H1 (cell line): ENCODE measurements at regions of chr16 and their contacts with region 1.

Region 1: GRCh38 chr16:67159593-67160406 is at the starts of genes FBXL8 and TRADD:
- DNase-seq: peak in 1 of 2 experiments; percentile 83
- H3K4me3 ChIP-seq: peak within 1 kb of the TSS; percentile 37 to 61 (median 46)
- H3K27ac ChIP-seq: no peak within 1 kb of the TSS
- H3K4me1 ChIP-seq: peaks cover 0 to 29% (median 20%) of the 10 kb centered on the region in 4 experiments; a peak in 6 of 7 replicates
- H3K27me3 ChIP-seq: peaks cover 93 to 100% (median 98%) of the 10 kb centered on the region in 4 experiments
- CTCF ChIP-seq: peak; percentile 20 to 46 (median 35); a peak in 3 of 4 replicates
- EP300 ChIP-seq: no peak
- POLR2A ChIP-seq: no peak
- RAD21 ChIP-seq: no peak; a peak in 1 of 4 replicates
- total RNA-seq, gene FBXL8: not detected in 2 replicates
- total RNA-seq, gene TRADD: 0.19 and 0.29 TPM in 2 replicates

Region 2: DNA sequence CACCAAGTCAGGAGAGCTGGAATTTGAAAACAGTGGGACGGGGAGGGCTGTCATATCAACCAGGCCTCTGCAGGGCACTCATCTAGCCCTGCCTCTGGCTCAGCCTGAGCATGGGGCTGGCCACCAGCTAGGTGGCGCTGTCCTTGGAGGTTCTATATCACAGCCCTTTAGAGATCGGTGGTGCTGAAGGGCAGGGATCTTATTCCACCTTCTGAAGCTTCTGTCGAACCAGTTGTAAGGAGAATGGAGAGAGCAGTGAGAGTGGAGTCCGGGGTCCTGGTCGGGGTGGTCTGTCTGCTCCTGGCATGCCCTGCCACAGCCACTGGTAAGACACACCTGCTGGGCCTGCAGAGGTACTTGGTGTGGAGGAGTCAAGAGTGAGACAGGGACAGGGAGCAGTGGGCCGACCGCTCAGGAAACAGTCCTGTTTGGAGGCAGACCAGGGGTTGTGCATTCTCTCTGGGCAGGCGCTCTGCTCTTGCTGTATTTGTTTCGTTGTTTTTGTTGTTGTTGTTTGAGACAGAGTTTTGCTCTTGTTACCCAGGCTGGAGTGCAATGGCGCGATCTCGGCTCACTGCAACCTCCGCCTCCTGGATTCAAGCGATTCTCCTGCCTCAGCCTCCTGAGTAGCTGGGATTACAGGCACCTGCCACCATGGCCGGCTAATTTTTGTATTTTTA is 198.6 kb before region 1 on chr16 and contains the start of gene CES3:
- CTCF ChIA-PET with region 1: interaction called, 32 read pairs
- POLR2A ChIA-PET with region 1: no interaction called
- DNase-seq: peak; percentile 79 to 87
- H3K4me3 ChIP-seq: peak within 1 kb of the TSS; percentile 8 to 50 (median 24); a peak in 6 of 8 replicates
- H3K27ac ChIP-seq: no peak within 1 kb of the TSS
- H3K4me1 ChIP-seq: peaks cover 0 to 3% (median under 1%) of the 10 kb centered on the region in 4 experiments; a peak in 3 of 7 replicates
- H3K27me3 ChIP-seq: no peaks in the 10 kb centered on the region
- CTCF ChIP-seq: peak; percentile 97 to 99 (median 99)
- EP300 ChIP-seq: no peak
- POLR2A ChIP-seq: peak in 1 of 2 experiments; percentile 37; a peak in 1 of 3 replicates
- RAD21 ChIP-seq: peak; percentile 33 to 48; a peak in 3 of 4 replicates
- total RNA-seq, gene CES3: 1.6 and 1.7 TPM in 2 replicates

Region 3: DNA sequence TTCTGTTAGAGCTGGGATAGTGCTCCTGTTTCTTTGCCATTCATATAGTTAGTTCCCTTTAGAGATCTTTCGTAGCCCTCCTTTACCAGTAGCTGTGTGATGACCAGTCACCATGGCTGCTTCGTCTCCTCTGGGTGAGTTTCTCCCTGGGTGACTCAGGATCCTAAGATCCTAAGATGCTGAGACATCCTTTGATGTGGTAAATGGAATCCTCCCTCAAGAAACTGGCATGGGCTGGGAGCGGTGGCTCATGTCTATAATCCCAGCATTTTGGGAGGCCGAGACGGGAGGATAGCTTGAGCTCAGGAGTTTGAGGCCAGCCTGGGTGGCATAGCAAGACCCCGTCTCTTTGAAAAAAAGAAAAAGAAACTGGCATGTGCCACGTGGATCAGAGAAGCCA is 44.2 kb before region 1 on chr16:
- CTCF ChIA-PET with region 1: interaction called, 10 read pairs
- POLR2A ChIA-PET with region 1: no interaction called
- DNase-seq: no peak
- H3K4me3 ChIP-seq: no peak overlapping the region
- H3K27ac ChIP-seq: no peak overlapping the region
- H3K4me1 ChIP-seq: 0 out of 7 replicates have a peak, but pooled peaks cover 0 to 2% (median 0%) of the 10 kb centered on the region in 4 experiments
- H3K27me3 ChIP-seq: no peaks in the 10 kb centered on the region
- CTCF ChIP-seq: no peak
- EP300 ChIP-seq: no peak
- POLR2A ChIP-seq: no peak
- RAD21 ChIP-seq: no peak

Region 4: GRCh38 chr16:67173808-67174705 is 14.3 kb after region 1 on chr16:
- CTCF ChIA-PET with region 1: interaction called, 291 read pairs
- POLR2A ChIA-PET with region 1: interaction called, 59 read pairs
- DNase-seq: peak in 1 of 2 experiments; percentile 78
- H3K4me3 ChIP-seq: peak overlapping the region; percentile 27 to 57 (median 34)
- H3K27ac ChIP-seq: no peak overlapping the region
- H3K4me1 ChIP-seq: peaks cover 0 to 40% (median 30%) of the 10 kb centered on the region in 4 experiments; a peak in 6 of 7 replicates
- H3K27me3 ChIP-seq: peaks cover 50 to 90% (median 86%) of the 10 kb centered on the region in 4 experiments
- CTCF ChIP-seq: peak in 2 of 3 experiments; percentile 14 to 15; a peak in 2 of 4 replicates
- EP300 ChIP-seq: no peak
- POLR2A ChIP-seq: no peak
- RAD21 ChIP-seq: peak; percentile 7 to 23; a peak in 2 of 4 replicates

Region 5: GRCh38 chr16:67198238-67198734 is 38.5 kb after region 1 on chr16:
- CTCF ChIA-PET with region 1: interaction called, 12 read pairs
- POLR2A ChIA-PET with region 1: interaction called, 3 read pairs
- DNase-seq: peak in 1 of 2 experiments; percentile 73
- H3K4me3 ChIP-seq: peak overlapping the region in 1 of 4 experiments; percentile 75; a peak in 2 of 8 replicates
- H3K27ac ChIP-seq: no peak overlapping the region
- H3K4me1 ChIP-seq: peaks cover 0 to 12% (median 8%) of the 10 kb centered on the region in 4 experiments; a peak in 5 of 7 replicates
- H3K27me3 ChIP-seq: no peaks in the 10 kb centered on the region
- CTCF ChIP-seq: peak; percentile 65 to 98 (median 68)
- EP300 ChIP-seq: no peak
- POLR2A ChIP-seq: no peak
- RAD21 ChIP-seq: peak in 1 of 2 experiments; percentile 40; a peak in 1 of 4 replicates